ENCODE measurements at regions of chr4 and their contacts with region 1.

Region 1: DNA sequence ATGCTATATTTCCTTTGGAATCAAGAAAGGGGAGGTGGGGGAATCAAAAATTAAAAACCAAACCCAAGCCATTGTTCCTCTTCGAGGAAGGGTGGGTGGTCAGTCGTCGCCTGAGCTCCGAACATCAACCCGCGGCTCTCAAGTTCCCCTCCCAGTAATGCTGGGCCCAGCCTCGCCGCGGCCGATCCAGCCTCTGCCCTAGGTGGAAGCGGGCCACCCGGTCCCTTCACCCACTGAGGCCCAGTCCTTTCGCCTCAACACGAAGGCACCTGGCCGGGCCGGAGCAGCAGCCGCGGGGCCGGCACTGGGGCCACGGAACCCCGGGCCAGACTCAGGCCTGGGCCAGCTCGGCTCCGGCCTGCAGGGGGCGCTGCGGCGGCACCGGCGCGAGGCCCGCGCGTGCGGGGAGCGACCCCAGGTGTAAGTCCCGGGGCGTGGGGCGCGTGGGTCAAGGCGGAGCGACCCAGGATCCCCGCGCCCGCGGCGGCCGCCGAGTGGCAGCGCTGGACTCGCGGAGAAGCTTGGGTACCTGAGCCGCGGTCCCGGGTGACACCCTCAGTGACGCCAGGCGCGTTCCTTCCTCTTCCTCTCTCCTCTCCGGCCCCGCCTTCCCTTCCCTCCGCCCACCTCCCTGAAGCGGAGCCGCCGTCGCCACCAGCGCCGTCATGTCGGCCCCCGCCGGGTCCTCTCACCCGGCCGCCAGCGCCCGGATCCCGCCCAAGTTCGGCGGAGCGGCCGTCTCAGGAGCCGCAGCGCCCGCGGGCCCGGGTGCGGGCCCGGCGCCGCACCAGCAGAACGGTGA is at the start of gene SEC24B:
- DNase-seq: peak; percentile 93
- H3K4me3 ChIP-seq: peak within 1 kb of the TSS; percentile 88 to 89
- H3K27ac ChIP-seq: peak within 1 kb of the TSS; percentile 34 to 82
- H3K4me1 ChIP-seq: peaks cover 17 to 19% of the 10 kb centered on the region in 2 experiments
- H3K27me3 ChIP-seq: no peaks in the 10 kb centered on the region
- CTCF ChIP-seq: peak; percentile 80
- EP300 ChIP-seq: no peak
- RAD21 ChIP-seq: peak; percentile 42
- polyA plus RNA-seq, gene SEC24B: 23.0 and 34.4 TPM in 2 replicates

Region 2: GRCh38 chr4:109444182-109444844 is 10.9 kb after region 1 on chr4:
- CTCF ChIA-PET with region 1: interaction called, 16 read pairs
- POLR2A ChIA-PET with region 1: no interaction called
- DNase-seq: no peak
- H3K4me3 ChIP-seq: no peak overlapping the region
- H3K27ac ChIP-seq: no peak overlapping the region
- H3K4me1 ChIP-seq: peaks cover 2 to 37% of the 10 kb centered on the region in 2 experiments; a peak in 3 of 4 replicates
- H3K27me3 ChIP-seq: no peaks in the 10 kb centered on the region
- CTCF ChIP-seq: no peak
- EP300 ChIP-seq: no peak
- RAD21 ChIP-seq: no peak

Region 3: GRCh38 chr4:109451544-109452273 is 18.3 kb after region 1 on chr4:
- CTCF ChIA-PET with region 1: interaction called, 10 read pairs
- POLR2A ChIA-PET with region 1: no interaction called
- DNase-seq: no peak
- H3K4me3 ChIP-seq: no peak overlapping the region
- H3K27ac ChIP-seq: no peak overlapping the region
- H3K4me1 ChIP-seq: no peaks in the 10 kb centered on the region
- H3K27me3 ChIP-seq: no peaks in the 10 kb centered on the region
- CTCF ChIP-seq: no peak
- EP300 ChIP-seq: no peak
- RAD21 ChIP-seq: no peak

Region 4: GRCh38 chr4:109611045-109611646 is 177.7 kb after region 1 on chr4:
- CTCF ChIA-PET with region 1: no interaction called
- POLR2A ChIA-PET with region 1: no interaction called
- DNase-seq: no peak
- H3K4me3 ChIP-seq: no peak overlapping the region
- H3K27ac ChIP-seq: no peak overlapping the region
- H3K4me1 ChIP-seq: no peaks in the 10 kb centered on the region
- H3K27me3 ChIP-seq: no peaks in the 10 kb centered on the region
- CTCF ChIP-seq: no peak
- EP300 ChIP-seq: no peak
- RAD21 ChIP-seq: no peak

Region 5: DNA sequence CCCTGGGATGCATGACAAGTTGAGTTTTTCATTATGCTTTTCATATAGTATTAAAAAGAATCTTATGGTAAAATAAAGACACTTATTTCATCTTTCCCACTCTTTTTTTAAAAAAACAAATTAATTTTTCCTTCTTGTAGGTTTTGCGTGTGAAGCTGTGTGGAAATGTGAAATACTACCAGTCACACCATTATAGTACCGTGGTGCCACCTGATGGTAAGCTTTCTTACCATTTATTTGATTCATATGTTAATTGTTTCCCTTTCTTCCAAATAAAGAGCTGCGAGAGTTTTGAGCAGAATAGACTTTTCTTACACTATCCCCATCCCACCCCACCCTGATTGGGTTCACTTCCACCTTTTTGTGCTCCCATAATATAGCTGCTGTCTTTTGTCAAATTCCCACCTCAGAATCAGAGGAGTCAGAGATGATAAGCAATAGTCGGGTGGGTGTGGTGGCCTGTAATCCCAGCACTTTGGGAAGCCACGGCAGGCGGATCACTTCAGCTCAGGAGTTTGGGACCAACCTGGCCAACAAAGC is 225.5 kb after region 1 on chr4:
- CTCF ChIA-PET with region 1: interaction called, 12 read pairs
- POLR2A ChIA-PET with region 1: no interaction called
- DNase-seq: no peak
- H3K4me3 ChIP-seq: no peak overlapping the region
- H3K27ac ChIP-seq: no peak overlapping the region
- H3K4me1 ChIP-seq: no peaks in the 10 kb centered on the region
- H3K27me3 ChIP-seq: no peaks in the 10 kb centered on the region
- CTCF ChIP-seq: peak; percentile 24
- EP300 ChIP-seq: no peak
- RAD21 ChIP-seq: peak; percentile 47

Measured in SK-N-SH (cell line).